ENCODE measurements at regions of chr2 and their contacts with region 1.

Region 1: GRCh38 chr2:69741619-69742466 is at the start of gene ANXA4:
- DNase-seq: peak; percentile 81
- ATAC-seq: peak; percentile 94
- H3K4me3 Mint-ChIP-seq: peak within 1 kb of the TSS; percentile 87
- H3K27ac Mint-ChIP-seq: peak within 1 kb of the TSS; percentile 85
- H3K4me1 Mint-ChIP-seq: peaks cover 19% of the 10 kb centered on the region
- H3K27me3 Mint-ChIP-seq: no peaks in the 10 kb centered on the region
- total RNA-seq, gene ANXA4: 56.1 to 66.6 TPM

Region 2: DNA sequence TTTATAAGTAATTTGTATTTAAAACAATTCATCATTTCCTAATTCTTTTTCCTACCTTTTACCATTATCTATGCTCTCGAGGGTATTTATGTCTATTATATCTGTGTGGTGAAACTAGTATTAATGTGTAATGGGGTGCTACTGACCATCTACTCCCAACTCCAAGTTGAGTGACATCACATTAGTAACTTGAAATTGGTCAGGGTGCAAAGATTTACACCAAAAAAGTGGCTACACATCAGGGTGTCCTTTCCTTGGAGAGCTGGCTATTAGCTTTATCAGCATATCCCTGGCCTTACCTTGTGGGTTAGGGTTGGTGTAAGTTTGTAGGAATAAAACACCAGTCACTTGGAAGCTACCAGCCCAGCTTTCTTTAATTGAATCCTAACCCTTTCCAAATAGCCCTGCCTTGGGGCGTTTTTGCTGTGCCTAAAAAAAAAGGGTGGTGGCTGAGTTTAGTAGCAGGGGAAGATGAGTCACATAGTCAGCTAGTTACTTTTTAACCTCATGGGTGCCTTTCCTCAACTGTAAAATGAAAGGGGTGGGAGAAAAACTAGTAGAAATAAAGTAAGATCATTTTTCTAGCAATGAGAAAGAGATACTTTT is 14.1 kb after region 1 on chr2:
- CTCF ChIA-PET with region 1: interaction called, 10 read pairs
- DNase-seq: peak; percentile 48
- ATAC-seq: peak; percentile 95
- H3K4me3 Mint-ChIP-seq: no peak overlapping the region
- H3K27ac Mint-ChIP-seq: peak overlapping the region; percentile 73
- H3K4me1 Mint-ChIP-seq: peaks cover 19% of the 10 kb centered on the region
- H3K27me3 Mint-ChIP-seq: no peaks in the 10 kb centered on the region

Region 3: DNA sequence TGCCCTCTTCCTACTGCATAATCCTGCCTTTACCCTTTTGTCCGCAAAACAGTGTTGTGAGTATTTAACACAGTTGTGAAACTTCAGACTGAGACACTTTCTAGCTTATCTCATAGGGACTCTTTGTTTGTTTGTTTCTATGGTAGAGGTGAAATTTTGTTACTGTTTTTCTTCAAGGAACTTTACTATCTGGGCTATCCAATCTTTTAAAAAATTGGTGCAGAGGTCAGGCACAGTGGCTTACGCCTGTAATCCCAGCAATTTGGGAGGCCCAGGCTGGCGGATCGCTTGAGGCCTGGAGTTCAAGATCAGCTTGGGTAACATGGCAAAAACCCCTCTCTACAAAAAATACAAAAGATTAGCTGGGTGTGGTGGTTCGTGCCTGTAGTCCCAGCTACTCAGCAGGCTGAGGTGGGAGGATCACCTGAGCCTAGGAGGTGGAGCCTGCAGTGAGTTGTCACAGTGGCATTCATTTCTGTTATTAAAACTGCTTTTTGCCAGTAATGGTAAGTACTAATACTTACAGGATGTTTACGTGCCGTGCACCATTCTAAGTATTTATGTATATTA is 106.4 kb after region 1 on chr2:
- CTCF ChIA-PET with region 1: no interaction called
- DNase-seq: no peak
- ATAC-seq: no peak
- H3K4me3 Mint-ChIP-seq: no peak overlapping the region
- H3K27ac Mint-ChIP-seq: no peak overlapping the region
- H3K4me1 Mint-ChIP-seq: no peaks in the 10 kb centered on the region
- H3K27me3 Mint-ChIP-seq: no peaks in the 10 kb centered on the region

Region 4: GRCh38 chr2:69902213-69902922 is 160.5 kb after region 1 on chr2:
- CTCF ChIA-PET with region 1: no interaction called
- DNase-seq: peak; percentile 43
- ATAC-seq: peak; percentile 56
- H3K4me3 Mint-ChIP-seq: peak overlapping the region; percentile 92
- H3K27ac Mint-ChIP-seq: peak overlapping the region; percentile 90
- H3K4me1 Mint-ChIP-seq: peaks cover 47% of the 10 kb centered on the region
- H3K27me3 Mint-ChIP-seq: no peaks in the 10 kb centered on the region

Region 5: GRCh38 chr2:69933839-69934613 is 192.2 kb after region 1 on chr2:
- CTCF ChIA-PET with region 1: no interaction called
- DNase-seq: no peak
- ATAC-seq: peak; percentile 50
- H3K4me3 Mint-ChIP-seq: no peak overlapping the region
- H3K27ac Mint-ChIP-seq: peak overlapping the region; percentile 30
- H3K4me1 Mint-ChIP-seq: peaks cover 37% of the 10 kb centered on the region
- H3K27me3 Mint-ChIP-seq: no peaks in the 10 kb centered on the region

Measured in activated CD8-positive, alpha-beta memory T cell treated with anti-CD3 and anti-CD28 coated beads, Interleukin-2, amount 10 ng/mL, durations not matched to agents 7 days and 5 days (primary cell).